Activated CD4-positive, alpha-beta memory T cell treated with anti-CD3 and anti-CD28 coated beads, Interleukin-2, amount 10 ng/mL, durations not matched to agents 7 days and 5 days (primary cell): ENCODE measurements at regions of chr7 and their contacts with region 1.

Region 1: DNA sequence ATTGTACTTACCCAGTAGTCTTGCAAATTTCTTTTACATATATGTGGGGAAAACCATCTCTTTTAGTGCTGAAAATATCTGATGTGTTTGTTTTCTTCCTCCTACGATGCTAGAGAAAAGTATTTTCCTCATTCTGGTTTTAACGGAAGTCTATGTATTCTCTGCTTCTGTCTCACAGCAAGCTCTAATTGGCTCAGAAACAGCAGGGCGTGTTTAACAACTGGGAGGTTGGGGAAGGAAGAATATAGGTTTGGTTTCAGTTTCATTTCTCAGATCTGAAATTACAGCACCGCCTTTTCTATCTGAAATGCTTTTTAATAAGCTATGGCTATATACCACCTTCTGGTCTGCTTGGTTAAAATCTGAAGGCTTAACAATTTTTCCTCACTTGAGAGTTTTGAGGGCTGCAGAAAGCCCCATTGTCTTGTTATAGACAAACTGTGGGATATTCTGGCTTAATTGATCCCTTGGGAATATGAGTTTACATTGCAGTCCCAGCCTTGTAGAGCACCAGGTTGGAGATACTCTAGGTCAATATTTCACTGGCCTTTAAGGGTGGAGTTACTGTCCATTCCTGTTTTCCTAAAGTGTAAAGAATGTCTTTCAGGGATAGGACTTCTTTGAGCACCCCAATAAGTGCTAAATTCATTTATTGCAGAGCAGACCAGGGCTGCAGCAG is at the start of gene SAMD9:
- DNase-seq: peak; percentile 72
- H3K4me3 Mint-ChIP-seq: peak within 1 kb of the TSS; percentile 98
- H3K27ac Mint-ChIP-seq: peak within 1 kb of the TSS; percentile 93
- H3K4me1 Mint-ChIP-seq: peaks cover 52% of the 10 kb centered on the region
- H3K27me3 Mint-ChIP-seq: no peaks in the 10 kb centered on the region
- total RNA-seq, gene SAMD9: 92.0 to 94.9 TPM

Region 2: GRCh38 chr7:92641921-92642511 is 476.0 kb before region 1 on chr7:
- CTCF ChIA-PET with region 1: no interaction called
- POLR2A ChIA-PET with region 1: no interaction called
- DNase-seq: peak; percentile 72
- H3K4me3 Mint-ChIP-seq: peak overlapping the region; percentile 18
- H3K27ac Mint-ChIP-seq: peak overlapping the region; percentile 91
- H3K4me1 Mint-ChIP-seq: peaks cover 88% of the 10 kb centered on the region
- H3K27me3 Mint-ChIP-seq: no peaks in the 10 kb centered on the region

Region 3: GRCh38 chr7:92904292-92905131 is 213.5 kb before region 1 on chr7:
- CTCF ChIA-PET with region 1: no interaction called
- POLR2A ChIA-PET with region 1: interaction called, 10 read pairs
- DNase-seq: peak; percentile 91
- H3K4me3 Mint-ChIP-seq: no peak overlapping the region
- H3K27ac Mint-ChIP-seq: peak overlapping the region; percentile 80
- H3K4me1 Mint-ChIP-seq: peaks cover 27% of the 10 kb centered on the region
- H3K27me3 Mint-ChIP-seq: no peaks in the 10 kb centered on the region

Region 4: DNA sequence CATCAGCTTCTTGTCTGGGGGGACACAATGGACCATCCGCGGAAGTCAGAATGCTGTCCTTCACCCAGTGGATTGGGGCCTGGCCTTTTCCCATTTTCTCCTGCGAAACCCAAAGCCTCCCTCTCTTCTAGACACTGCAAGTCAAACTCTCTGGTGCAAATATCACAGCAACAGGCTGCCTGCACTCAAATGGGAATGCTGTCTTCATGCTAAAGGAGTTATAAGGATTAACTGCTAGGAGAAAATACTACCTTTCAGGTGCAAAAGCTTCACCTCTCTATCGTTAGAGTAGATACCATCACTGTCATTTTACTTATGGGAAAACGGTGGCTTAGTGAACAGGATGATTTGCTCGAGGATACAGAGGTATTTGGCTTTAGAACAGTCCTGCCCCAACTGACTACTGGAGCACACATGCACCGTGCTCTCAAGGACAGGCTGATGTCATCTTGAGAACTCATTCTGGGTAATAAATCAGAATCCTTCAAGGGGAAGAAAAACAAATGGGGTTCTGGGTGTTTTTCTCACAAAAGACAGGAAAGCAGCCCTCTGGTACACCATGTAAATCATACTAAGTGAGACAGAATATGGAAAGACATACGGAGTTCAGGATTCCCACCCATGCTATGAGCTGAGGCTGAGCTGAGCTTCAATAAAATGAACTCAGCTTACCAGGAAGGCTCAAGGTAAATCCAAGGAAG is 101.2 kb before region 1 on chr7:
- CTCF ChIA-PET with region 1: no interaction called
- POLR2A ChIA-PET with region 1: no interaction called
- DNase-seq: no peak
- H3K4me3 Mint-ChIP-seq: no peak overlapping the region
- H3K27ac Mint-ChIP-seq: no peak overlapping the region
- H3K4me1 Mint-ChIP-seq: no peaks in the 10 kb centered on the region
- H3K27me3 Mint-ChIP-seq: no peaks in the 10 kb centered on the region

Region 5: DNA sequence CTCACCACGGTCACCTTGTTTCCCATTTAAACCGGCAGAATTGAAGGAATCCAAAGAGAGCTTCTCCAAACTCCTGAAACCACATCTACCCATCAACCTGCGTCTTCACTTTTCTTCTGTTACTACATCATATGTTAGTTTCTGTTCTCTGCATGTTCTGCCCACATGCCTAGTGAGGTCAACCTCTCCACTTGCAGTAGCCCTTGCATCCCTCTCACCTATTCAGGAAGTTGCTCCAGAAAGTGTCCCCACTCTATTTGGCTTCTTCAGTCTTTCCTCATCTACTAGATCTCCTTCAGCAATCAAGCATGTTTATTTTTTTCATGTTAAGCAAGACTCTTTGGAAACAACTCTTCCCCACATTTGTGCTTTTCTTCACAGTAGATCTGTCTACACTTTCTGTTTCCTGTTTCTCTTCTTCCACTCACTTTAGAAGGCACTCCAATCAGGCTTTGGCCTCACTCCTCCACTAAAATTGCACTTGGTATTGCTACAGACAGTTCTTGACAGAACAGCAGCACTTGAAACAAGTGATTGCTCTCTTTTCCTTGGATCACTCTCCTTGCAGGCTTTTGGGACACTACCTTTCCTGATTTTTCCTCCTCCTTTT is 22.7 kb after region 1 on chr7:
- CTCF ChIA-PET with region 1: interaction called, 4 read pairs
- POLR2A ChIA-PET with region 1: interaction called, 13 read pairs
- DNase-seq: no peak
- H3K4me3 Mint-ChIP-seq: no peak overlapping the region
- H3K27ac Mint-ChIP-seq: no peak overlapping the region
- H3K4me1 Mint-ChIP-seq: peaks cover 20% of the 10 kb centered on the region
- H3K27me3 Mint-ChIP-seq: no peaks in the 10 kb centered on the region

Region 6: DNA sequence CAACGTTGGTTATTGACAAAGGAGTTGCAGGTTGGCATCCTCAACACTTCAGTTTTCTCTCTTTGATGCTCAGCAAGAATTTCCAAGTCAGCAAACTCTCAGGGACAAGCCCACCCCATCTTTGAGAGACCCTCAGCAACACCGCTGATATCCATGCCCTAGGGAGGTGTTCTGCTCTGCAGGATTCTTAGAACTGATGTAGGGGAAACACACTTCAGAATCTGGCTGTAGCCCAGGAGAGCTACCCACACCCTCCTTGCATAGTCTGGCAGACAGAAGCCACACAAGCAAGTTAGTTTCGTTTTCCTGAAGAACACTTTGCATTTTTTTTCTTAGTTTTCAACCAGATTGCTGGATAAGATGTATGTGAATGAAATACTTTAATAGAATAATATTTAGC is 29.4 kb after region 1 on chr7:
- CTCF ChIA-PET with region 1: interaction called, 4 read pairs
- POLR2A ChIA-PET with region 1: interaction called, 46 read pairs
- DNase-seq: peak; percentile 54
- H3K4me3 Mint-ChIP-seq: peak overlapping the region; percentile 91
- H3K27ac Mint-ChIP-seq: peak overlapping the region; percentile 91
- H3K4me1 Mint-ChIP-seq: peaks cover 45% of the 10 kb centered on the region
- H3K27me3 Mint-ChIP-seq: no peaks in the 10 kb centered on the region

Region 7: DNA sequence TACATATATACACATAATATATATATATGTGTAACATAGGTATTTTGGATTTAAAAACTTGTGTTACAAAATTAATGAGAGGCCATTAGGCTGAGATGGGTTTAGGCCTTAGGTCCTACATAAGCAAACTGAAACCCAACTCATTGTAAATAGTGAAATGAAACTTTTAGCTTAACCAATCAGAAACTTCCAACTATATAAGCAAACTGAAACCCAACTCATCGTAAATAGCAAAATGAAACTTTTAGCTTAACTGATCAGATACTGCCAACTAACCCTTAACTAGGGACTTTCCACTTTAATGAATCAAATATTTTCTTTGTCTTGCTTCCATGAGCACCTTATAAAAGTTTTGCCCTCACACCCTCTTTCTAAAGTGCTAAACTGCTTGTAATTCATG is 47.5 kb after region 1 on chr7:
- CTCF ChIA-PET with region 1: no interaction called
- POLR2A ChIA-PET with region 1: interaction called, 14 read pairs
- DNase-seq: no peak
- H3K4me3 Mint-ChIP-seq: no peak overlapping the region
- H3K27ac Mint-ChIP-seq: peak overlapping the region; percentile 55
- H3K4me1 Mint-ChIP-seq: peaks cover 19% of the 10 kb centered on the region
- H3K27me3 Mint-ChIP-seq: no peaks in the 10 kb centered on the region

Region 8: DNA sequence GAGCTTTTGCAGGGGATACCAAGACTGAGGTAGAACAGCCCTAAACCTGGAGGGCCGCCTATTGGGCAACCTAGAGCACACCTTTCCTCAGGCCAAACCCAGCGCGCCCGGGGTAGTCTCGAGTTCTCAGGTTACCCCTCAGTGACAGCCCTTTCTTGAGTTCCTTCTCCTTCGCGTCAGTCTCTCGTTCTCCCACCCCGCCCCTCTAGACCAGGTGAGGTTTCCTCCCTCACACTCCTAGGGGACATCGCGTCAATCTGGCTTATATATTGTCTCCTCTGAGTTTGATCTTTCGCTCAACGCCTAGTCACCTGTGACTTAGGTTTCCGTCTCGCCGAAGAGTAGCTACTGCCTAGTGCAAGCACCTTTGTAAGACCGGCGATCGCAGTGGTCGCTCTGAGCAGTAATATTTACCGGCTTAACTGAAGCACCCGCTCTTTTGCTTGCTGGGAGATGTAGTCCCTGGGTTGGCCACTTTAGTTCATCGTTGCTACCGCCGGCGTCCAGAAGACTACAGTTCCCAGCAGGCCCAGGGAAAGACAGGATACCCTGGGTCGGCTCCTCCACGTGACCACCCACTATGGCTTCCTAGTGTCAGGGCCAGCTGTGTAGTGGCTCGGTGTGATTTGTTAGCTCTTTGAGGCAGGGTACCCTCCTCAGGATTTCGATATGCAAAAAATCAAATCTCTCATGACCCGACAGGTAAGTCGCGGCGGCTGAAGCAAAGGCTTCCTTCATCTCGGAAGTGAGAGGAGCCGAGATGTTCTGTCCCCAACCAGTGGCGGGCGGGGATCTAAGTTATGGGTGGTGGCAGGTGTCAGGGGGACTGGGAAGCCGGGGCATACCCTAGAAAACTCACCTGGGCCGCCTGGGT is 114.0 kb after region 1 on chr7 and contains the start of gene VPS50:
- CTCF ChIA-PET with region 1: interaction called, 3 read pairs
- POLR2A ChIA-PET with region 1: interaction called, 19 read pairs
- DNase-seq: peak; percentile 94
- H3K4me3 Mint-ChIP-seq: peak within 1 kb of the TSS; percentile 90
- H3K27ac Mint-ChIP-seq: peak within 1 kb of the TSS; percentile 85
- H3K4me1 Mint-ChIP-seq: peaks cover 30% of the 10 kb centered on the region
- H3K27me3 Mint-ChIP-seq: no peaks in the 10 kb centered on the region
- total RNA-seq, gene VPS50: 17.0 to 21.5 TPM